Activated CD4-positive, alpha-beta T cell treated with anti-CD3 and anti-CD28 coated beads, Interleukin-2, amount 10 ng/mL, durations not matched to agents 24 days and 14 days (primary cell): ENCODE measurements at regions of chr3 and their contacts with region 1.

Region 1: GRCh38 chr3:108090701-108091451 is at the start of gene CD47:
- DNase-seq: peak; percentile 99
- H3K4me3 Mint-ChIP-seq: peak within 1 kb of the TSS; percentile 98
- H3K27ac Mint-ChIP-seq: peak within 1 kb of the TSS; percentile 100
- H3K4me1 Mint-ChIP-seq: peaks cover 35% of the 10 kb centered on the region
- H3K27me3 Mint-ChIP-seq: no peaks in the 10 kb centered on the region
- total RNA-seq, gene CD47: 104 and 109 TPM in 2 replicates

Region 2: DNA sequence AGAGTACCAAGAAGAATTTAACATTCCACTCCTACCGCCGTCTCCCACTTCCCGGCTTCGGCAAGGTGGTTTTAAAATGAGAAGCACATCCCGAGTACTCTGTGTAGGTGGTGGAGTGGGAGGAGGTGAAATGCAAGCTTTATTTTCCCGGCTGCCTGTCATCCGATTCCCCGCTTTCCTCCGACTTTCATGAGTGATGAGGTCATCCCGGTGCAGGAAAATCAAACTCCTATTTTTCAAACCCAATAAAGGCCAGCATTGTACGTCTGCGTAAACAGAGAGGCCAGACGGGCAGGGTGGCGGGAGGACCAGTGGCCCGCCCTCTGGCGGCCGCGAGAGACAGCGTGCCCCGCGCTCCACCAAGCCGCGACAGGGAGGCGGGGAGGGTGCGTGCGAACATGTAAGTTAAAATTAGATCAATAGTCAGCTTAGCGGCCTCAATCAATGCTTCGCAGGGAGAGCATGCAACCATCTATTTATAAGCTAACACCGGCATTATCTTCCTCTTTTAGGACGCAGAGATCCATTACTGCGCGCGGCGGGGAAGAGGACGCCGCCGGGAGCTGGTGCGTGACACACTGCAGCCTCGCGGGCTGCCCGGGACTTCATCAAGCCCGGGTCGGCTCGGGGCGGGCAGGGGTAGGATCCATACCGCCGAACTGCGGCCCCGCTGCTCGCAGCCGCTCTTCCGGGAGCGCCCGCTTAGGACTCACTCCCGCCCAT is 163.4 kb before region 1 on chr3:
- intact Hi-C with region 1: loop called (anchors 5 kb)
- DNase-seq: peak; percentile 90
- H3K4me3 Mint-ChIP-seq: peak overlapping the region; percentile 87
- H3K27ac Mint-ChIP-seq: peak overlapping the region; percentile 59
- H3K4me1 Mint-ChIP-seq: peaks cover 13% of the 10 kb centered on the region
- H3K27me3 Mint-ChIP-seq: peaks cover 19% of the 10 kb centered on the region

Region 3: DNA sequence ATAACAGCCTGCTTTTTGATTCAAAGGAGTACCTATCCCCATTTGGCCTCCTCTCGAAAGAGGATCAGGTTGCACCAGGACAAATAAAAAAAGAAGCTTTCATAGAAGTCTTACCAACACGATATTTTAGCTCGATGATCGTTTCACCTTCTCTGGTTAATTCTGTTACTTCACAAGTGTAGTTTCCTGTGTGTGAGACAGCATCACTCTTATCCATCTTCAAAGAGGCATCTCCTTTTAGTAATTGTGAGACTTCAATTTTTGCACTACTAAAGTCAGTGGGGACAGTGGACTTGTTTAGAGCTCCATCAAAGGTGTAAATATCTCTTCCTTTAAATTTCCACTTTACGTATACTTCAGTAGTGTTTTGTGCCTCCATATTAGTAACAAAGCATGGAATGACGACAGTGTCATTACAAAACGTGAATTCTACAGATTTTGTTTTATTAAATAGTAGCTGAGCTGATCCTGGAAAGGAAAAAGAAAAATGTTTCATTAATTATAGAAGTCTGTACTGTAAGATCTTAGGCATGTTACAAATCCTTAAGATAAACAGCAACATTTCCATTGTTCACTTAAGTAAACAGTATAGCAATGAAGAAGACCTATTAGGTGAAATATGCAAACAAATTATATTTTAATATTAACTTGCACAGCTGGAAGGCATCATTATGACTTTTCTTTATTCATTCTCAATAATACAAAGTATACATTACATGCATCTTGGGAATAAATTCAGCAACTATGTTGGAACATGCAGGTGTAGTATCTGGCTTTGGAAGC is 10.8 kb before region 1 on chr3:
- intact Hi-C with region 1: loop called (anchors 1 kb)
- DNase-seq: peak; percentile 41
- H3K4me3 Mint-ChIP-seq: peak overlapping the region; percentile 25
- H3K27ac Mint-ChIP-seq: peak overlapping the region; percentile 32
- H3K4me1 Mint-ChIP-seq: peaks cover 44% of the 10 kb centered on the region
- H3K27me3 Mint-ChIP-seq: no peaks in the 10 kb centered on the region

Region 4: DNA sequence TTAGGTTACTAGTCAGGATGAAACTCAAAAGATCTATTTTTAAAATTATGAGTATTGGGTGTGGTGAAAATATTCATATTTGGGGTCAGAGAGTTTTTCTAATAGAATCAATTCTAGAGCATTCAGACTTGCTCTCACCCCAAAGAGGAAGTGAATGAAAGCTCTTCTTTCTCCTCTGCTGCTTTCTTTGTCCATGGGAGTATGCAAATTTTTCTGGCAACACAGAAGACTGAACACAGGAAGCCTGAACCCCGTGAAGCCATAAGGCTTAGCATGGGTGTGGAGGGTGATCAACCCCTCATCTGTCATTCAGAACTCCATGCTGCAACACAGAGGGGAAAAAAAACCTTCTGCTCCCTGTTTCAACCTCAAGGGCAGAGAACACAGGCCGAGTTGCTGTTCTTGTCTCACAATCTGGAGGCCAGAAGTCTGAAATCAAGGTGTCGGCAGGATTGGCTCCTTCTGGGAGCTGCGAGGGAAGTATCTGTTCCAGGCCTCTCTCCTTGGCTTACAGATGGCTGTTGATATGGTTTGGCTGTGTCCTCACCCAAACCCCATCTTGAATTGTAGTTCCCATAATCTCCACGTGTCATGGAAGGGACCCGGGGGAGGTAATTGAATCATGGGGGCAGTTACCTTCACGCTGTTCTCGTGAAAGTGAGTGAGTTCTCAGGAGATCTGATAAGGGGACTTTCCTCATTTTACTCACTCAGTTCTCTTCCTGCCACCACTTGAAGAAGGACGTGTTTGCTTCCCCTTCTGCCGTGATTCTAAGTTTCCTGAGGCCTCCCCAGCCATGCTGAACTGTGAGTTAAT is 33.7 kb after region 1 on chr3:
- intact Hi-C with region 1: loop called (anchors 1 kb)
- DNase-seq: peak; percentile 91
- H3K4me3 Mint-ChIP-seq: peak overlapping the region; percentile 96
- H3K27ac Mint-ChIP-seq: peak overlapping the region; percentile 99
- H3K4me1 Mint-ChIP-seq: peaks cover 53% of the 10 kb centered on the region
- H3K27me3 Mint-ChIP-seq: no peaks in the 10 kb centered on the region

Region 5: DNA sequence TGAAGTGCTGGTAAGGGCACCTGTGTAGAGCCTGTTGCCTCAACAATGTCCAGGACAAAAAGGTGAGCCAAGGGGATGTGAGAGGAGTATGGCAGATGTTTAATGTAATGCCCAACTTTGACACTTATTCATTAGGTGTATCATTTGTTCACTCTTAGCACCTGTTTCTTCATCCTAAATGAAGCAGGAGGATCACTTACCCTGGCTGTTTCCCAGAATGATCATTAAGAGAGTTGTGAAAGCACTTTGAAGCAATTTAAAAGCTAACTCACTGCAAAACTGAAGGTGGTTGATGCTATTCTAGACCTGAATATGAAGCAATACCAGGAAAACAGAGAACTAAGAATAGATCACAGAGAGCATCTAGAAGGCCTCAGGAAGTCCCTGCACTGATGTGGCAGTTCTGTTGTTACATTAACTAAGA is 202.0 kb after region 1 on chr3:
- intact Hi-C with region 1: loop called (anchors 2 kb)
- DNase-seq: peak; percentile 74
- H3K4me3 Mint-ChIP-seq: peak overlapping the region; percentile 58
- H3K27ac Mint-ChIP-seq: peak overlapping the region; percentile 85
- H3K4me1 Mint-ChIP-seq: peaks cover 60% of the 10 kb centered on the region
- H3K27me3 Mint-ChIP-seq: no peaks in the 10 kb centered on the region

Region 6: DNA sequence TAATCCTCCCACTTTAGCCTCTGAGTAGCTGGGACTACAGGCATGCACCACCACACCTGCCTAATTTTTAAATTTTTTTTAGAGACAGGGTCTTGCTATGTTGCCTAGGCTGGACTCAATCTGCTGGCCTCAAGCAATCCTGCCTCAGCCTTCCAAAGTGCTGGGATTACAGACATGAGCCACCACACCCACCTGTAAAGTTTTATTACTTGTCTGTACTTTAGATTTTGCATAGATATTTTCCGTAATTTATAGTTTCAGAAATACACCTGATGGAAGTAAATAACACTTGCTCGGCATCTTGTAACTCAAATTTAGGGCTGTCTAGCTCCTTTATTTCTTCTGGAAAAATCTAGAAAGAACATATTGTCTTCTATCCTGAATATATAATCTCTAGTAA is 504.4 kb after region 1 on chr3:
- intact Hi-C with region 1: no loop called
- DNase-seq: no peak
- H3K4me3 Mint-ChIP-seq: no peak overlapping the region
- H3K27ac Mint-ChIP-seq: no peak overlapping the region
- H3K4me1 Mint-ChIP-seq: peaks cover 24% of the 10 kb centered on the region
- H3K27me3 Mint-ChIP-seq: no peaks in the 10 kb centered on the region

Region 7: DNA sequence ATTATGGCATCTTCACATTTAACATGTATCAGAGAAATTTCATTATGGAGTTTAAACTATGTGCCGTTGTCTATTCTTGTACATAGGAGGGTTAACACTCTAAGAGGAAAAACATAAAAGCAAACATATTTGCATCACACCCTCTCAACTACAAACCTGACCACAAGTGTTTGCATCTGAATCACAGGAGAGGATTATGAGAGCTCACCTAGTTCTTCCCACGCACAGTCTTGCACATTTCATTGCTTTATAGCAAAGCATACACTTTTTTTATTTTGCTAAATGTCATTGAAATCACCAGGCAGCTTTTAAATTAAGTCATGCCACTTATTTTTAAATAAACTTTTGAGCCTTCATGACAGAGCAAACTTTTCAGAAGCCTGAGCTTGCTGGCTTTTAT is 744.2 kb after region 1 on chr3:
- intact Hi-C with region 1: loop called (anchors 2 kb)
- DNase-seq: peak; percentile 86
- H3K4me3 Mint-ChIP-seq: peak overlapping the region; percentile 90
- H3K27ac Mint-ChIP-seq: peak overlapping the region; percentile 98
- H3K4me1 Mint-ChIP-seq: peaks cover 70% of the 10 kb centered on the region
- H3K27me3 Mint-ChIP-seq: no peaks in the 10 kb centered on the region